BJ (cell line): ENCODE measurements at regions of chr15 and their contacts with region 1.

Region 1: GRCh38 chr15:84879088-84879792 is 5.2 kb upstream of the SLC28A1 start:
- DNase-seq: no peak
- H3K4me3 ChIP-seq: no peak overlapping the region
- H3K27me3 ChIP-seq: peaks cover 3% of the 10 kb centered on the region; the same call in 1 of the 2 replicates
- CTCF ChIP-seq: no peak

Region 2: DNA sequence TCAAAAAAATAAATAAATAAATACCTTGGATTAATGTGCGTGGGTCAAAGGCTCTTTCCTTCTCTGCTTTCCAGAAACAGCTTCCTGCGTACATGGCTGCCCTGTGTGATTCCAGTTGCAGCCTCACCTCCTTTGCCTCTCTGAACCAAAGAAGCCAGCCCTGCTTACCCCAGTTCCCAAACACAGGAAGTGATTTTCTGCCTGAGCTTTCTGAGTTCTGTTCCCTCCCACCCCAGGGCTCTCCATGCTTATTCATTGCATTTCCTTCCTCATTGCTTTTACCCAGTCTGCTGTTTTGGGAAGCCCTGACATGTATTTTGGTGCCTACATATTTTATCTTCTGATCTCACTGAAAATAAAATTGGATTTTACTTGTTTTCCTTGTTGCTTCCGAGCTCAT is 263.0 kb before region 1 on chr15:
- CTCF ChIA-PET with region 1: no interaction called
- POLR2A ChIA-PET with region 1: no interaction called
- DNase-seq: no peak
- H3K4me3 ChIP-seq: no peak overlapping the region
- H3K27me3 ChIP-seq: no peaks in the 10 kb centered on the region
- CTCF ChIP-seq: no peak

Region 3: DNA sequence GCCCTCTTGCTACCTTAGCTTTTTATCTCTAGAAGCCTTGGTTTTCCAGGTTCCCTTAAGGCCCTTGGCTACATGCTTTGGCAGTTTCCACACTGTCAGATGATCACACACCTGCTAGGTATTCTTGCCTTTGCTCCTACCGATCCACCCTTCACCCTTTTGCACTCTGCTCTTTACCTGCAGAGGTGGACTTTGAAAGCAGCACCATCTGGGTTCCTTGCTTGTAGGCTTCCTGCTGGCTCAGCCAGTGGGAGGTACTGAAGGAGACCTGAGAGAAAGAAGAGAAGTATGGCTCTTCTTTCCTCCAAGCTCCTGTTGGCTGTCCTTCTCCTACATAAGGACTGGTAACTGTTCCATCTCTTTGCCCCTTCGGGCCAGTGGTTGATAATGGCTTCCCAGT is 138.1 kb before region 1 on chr15:
- CTCF ChIA-PET with region 1: no interaction called
- POLR2A ChIA-PET with region 1: no interaction called
- DNase-seq: no peak
- H3K4me3 ChIP-seq: no peak overlapping the region
- H3K27me3 ChIP-seq: no peaks in the 10 kb centered on the region
- CTCF ChIP-seq: no peak

Region 4: GRCh38 chr15:84863565-84864443 is 15.4 kb before region 1 on chr15:
- CTCF ChIA-PET with region 1: interaction called, 16 read pairs
- POLR2A ChIA-PET with region 1: no interaction called
- DNase-seq: no peak
- H3K4me3 ChIP-seq: no peak overlapping the region
- H3K27me3 ChIP-seq: no peaks in the 10 kb centered on the region
- CTCF ChIP-seq: peak; percentile 18; the same call in 1 of the 2 replicates